Breast epithelium (tissue), 4 donors: ENCODE measurements at regions of chr2 and their contacts with region 1.

Region 1: DNA sequence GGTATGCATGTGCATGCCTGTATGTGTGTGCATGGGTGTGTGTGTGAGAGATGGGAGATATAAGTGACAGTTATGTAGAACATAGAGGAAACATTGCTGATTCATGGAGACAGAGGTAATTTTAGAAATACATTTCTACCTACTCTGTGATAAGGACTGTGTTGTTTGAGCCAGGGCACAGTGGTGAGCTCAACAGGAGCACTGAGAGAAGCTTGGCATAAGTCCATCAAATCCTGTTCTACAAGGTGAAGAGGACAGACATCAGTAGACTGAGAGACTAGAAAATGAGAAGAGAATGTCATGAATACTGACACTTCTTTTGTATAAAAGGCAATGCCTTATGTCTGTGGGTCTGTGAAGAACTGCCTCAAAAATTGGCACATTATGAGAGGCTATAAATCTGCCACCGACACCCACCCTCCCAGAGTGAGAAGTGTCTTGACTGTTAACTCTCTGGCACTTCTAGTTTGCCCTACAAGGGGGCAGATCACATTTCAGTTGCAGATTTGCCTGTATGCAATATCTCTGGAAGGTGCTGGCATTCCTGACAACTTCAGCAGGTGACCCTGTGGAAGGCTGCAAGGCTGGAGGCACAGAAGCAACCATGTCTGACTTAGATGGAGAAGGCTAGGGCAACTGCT is 962.3 kb upstream of the NRXN1 start:
- DNase-seq: no peak
- H3K4me3 ChIP-seq: no peak overlapping the region
- H3K27ac ChIP-seq: no peak overlapping the region
- H3K4me1 ChIP-seq: no peaks in the 10 kb centered on the region
- H3K27me3 ChIP-seq: no peaks in the 10 kb centered on the region
- CTCF ChIP-seq: no peak
- POLR2A ChIP-seq: no peak

Region 2: GRCh38 chr2:51981783-51982182 is 12.5 kb before region 1 on chr2:
- intact Hi-C with region 1: no loop called
- DNase-seq: no peak
- H3K4me3 ChIP-seq: no peak overlapping the region
- H3K27ac ChIP-seq: no peak overlapping the region
- H3K4me1 ChIP-seq: no peaks in the 10 kb centered on the region
- H3K27me3 ChIP-seq: no peaks in the 10 kb centered on the region
- CTCF ChIP-seq: no peak
- POLR2A ChIP-seq: no peak

Region 3: GRCh38 chr2:53559302-53559967 is 1565.2 kb after region 1 on chr2:
- intact Hi-C with region 1: loop called (anchors 5 kb)
- DNase-seq: no peak
- H3K4me3 ChIP-seq: no peak overlapping the region
- H3K27ac ChIP-seq: no peak overlapping the region
- H3K4me1 ChIP-seq: no peaks in the 10 kb centered on the region
- H3K27me3 ChIP-seq: no peaks in the 10 kb centered on the region
- CTCF ChIP-seq: no peak
- POLR2A ChIP-seq: no peak